ENCODE measurements at regions of chr10 and their contacts with region 1.

Region 1: DNA sequence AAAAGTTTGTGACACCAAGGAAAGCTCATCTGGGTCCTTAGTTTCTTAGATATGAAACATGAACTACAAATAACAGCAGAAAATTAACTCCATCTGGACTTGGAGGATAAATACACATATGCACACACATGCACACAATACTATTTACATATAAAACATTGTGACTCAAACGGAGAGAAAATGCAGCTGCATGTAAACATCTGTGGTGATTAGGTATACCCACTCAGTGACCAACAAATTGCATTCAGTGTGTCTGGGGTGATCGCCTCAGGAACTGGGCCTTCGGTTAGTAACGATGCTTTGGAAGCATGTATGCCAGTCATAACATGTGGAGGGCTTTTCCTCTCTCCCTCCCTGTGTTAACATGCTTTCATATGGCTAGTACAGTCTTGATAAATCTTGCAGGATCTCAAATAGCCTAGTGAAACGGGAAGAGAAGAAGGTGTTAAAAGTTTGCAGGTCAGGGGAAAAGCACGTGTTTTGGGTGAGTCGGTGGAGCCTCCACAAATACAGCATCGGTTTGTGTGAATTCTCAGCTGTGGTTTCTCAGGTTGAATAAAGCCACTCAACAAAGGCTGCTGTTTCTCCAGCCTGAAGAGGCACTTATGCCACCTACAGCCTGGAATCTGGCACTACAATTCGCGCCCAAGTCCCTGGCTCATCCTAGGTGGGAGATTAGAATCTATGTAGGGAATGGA is 8.7 kb upstream of the GLRX3 start:
- DNase-seq: peak; percentile 76
- H3K4me3 ChIP-seq: no peak overlapping the region
- H3K27ac ChIP-seq: no peak overlapping the region
- H3K4me1 ChIP-seq: no peaks in the 10 kb centered on the region
- H3K27me3 ChIP-seq: peaks cover 5 to 8% of the 10 kb centered on the region in 2 experiments
- CTCF ChIP-seq: peak; percentile 73
- POLR2A ChIP-seq: no peak

Region 2: GRCh38 chr10:128211953-128212727 is 1915.4 kb before region 1 on chr10:
- CTCF ChIA-PET with region 1: interaction called, 15 read pairs
- POLR2A ChIA-PET with region 1: no interaction called
- dilution Hi-C with region 1: no loop called
- intact Hi-C with region 1: no loop called
- DNase-seq: peak; percentile 72
- H3K4me3 ChIP-seq: no peak overlapping the region
- H3K27ac ChIP-seq: no peak overlapping the region
- H3K4me1 ChIP-seq: peaks cover 9% of the 10 kb centered on the region
- H3K27me3 ChIP-seq: no peaks in the 10 kb centered on the region
- CTCF ChIP-seq: peak; percentile 99 to 100
- POLR2A ChIP-seq: no peak

Region 3: GRCh38 chr10:128263891-128264688 is 1863.4 kb before region 1 on chr10:
- CTCF ChIA-PET with region 1: interaction called, 11 read pairs
- POLR2A ChIA-PET with region 1: no interaction called
- dilution Hi-C with region 1: no loop called
- intact Hi-C with region 1: loop called (anchors 2 kb)
- DNase-seq: peak; percentile 52
- H3K4me3 ChIP-seq: no peak overlapping the region
- H3K27ac ChIP-seq: no peak overlapping the region
- H3K4me1 ChIP-seq: no peaks in the 10 kb centered on the region
- H3K27me3 ChIP-seq: peaks cover 2 to 12% of the 10 kb centered on the region in 2 experiments
- CTCF ChIP-seq: peak; percentile 60 to 73
- POLR2A ChIP-seq: no peak

Region 4: GRCh38 chr10:129888784-129889616 is 238.5 kb before region 1 on chr10:
- CTCF ChIA-PET with region 1: no interaction called
- POLR2A ChIA-PET with region 1: no interaction called
- dilution Hi-C with region 1: no loop called
- intact Hi-C with region 1: loop called (anchors 2 kb)
- DNase-seq: peak; percentile 2
- H3K4me3 ChIP-seq: no peak overlapping the region
- H3K27ac ChIP-seq: no peak overlapping the region
- H3K4me1 ChIP-seq: no peaks in the 10 kb centered on the region
- H3K27me3 ChIP-seq: no peaks in the 10 kb centered on the region
- CTCF ChIP-seq: peak; percentile 53 to 57
- POLR2A ChIP-seq: no peak

Region 5: DNA sequence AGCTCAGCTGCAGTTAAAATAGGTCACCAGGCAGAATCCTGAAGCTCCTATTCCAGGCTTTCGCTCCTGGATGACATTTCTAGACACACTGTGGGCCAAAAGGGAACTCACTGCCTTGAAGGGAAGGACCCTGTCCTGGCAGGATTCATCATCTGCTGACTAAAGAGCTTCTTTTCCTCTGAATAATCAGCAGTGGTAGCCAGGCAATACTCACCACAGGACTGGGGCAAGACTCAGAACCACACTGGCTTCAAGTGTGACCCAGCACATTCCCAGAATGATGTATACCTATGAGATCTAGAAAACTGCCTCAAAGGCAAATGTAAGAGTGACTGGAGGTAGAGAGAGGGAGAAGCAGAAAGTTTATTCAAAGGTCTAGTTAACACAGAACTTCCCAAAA is 133.9 kb before region 1 on chr10:
- CTCF ChIA-PET with region 1: no interaction called
- POLR2A ChIA-PET with region 1: no interaction called
- dilution Hi-C with region 1: no loop called
- intact Hi-C with region 1: no loop called
- DNase-seq: no peak
- H3K4me3 ChIP-seq: no peak overlapping the region
- H3K27ac ChIP-seq: no peak overlapping the region
- H3K4me1 ChIP-seq: no peaks in the 10 kb centered on the region
- H3K27me3 ChIP-seq: no peaks in the 10 kb centered on the region
- CTCF ChIP-seq: no peak
- POLR2A ChIP-seq: no peak

Measured in endothelial cell of umbilical vein (primary cell).